Mammary epithelial cell (primary cell): ENCODE measurements at regions of chr1 and their contacts with region 1.

Region 1: DNA sequence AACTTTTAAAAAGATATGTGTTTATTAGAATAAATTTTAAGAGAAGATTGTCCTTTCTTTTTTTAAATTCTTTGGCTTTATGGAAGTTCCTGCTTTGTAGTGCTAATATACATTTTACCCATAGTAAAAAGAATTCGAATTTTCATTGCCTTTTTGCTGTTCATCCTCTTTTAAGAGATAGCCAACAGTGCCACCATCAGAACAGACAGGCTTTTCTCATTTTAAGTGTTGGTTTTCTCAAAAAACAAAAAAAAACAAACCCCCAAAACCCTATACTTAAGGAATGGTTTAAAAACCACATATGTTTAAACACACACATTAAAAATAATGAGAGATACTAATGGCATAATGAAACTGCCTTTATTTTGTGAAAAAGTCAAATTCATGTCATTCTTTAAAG is 118.8 kb downstream of the NEK7 start:
- DNase-seq: no peak
- H3K4me3 ChIP-seq: no peak overlapping the region
- H3K27ac ChIP-seq: no peak overlapping the region
- H3K4me1 ChIP-seq: no peaks in the 10 kb centered on the region
- H3K27me3 ChIP-seq: no peaks in the 10 kb centered on the region
- CTCF ChIP-seq: no peak

Region 2: GRCh38 chr1:198088360-198089071 is 187.1 kb before region 1 on chr1:
- CTCF ChIA-PET with region 1: interaction called, 3 read pairs
- dilution Hi-C with region 1: no loop called
- in situ Hi-C with region 1: no loop called
- intact Hi-C with region 1: loop called (anchors 5 kb)
- DNase-seq: peak; percentile 45
- H3K4me3 ChIP-seq: no peak overlapping the region
- H3K27ac ChIP-seq: no peak overlapping the region
- H3K4me1 ChIP-seq: no peaks in the 10 kb centered on the region
- H3K27me3 ChIP-seq: no peaks in the 10 kb centered on the region
- CTCF ChIP-seq: peak; percentile 56 to 66

Region 3: GRCh38 chr1:198201956-198202784 is 73.4 kb before region 1 on chr1:
- CTCF ChIA-PET with region 1: no interaction called
- dilution Hi-C with region 1: no loop called
- in situ Hi-C with region 1: no loop called
- intact Hi-C with region 1: loop called (anchors 5 kb)
- DNase-seq: no peak
- H3K4me3 ChIP-seq: no peak overlapping the region
- H3K27ac ChIP-seq: no peak overlapping the region
- H3K4me1 ChIP-seq: peaks cover 4% of the 10 kb centered on the region
- H3K27me3 ChIP-seq: no peaks in the 10 kb centered on the region
- CTCF ChIP-seq: no peak

Region 4: DNA sequence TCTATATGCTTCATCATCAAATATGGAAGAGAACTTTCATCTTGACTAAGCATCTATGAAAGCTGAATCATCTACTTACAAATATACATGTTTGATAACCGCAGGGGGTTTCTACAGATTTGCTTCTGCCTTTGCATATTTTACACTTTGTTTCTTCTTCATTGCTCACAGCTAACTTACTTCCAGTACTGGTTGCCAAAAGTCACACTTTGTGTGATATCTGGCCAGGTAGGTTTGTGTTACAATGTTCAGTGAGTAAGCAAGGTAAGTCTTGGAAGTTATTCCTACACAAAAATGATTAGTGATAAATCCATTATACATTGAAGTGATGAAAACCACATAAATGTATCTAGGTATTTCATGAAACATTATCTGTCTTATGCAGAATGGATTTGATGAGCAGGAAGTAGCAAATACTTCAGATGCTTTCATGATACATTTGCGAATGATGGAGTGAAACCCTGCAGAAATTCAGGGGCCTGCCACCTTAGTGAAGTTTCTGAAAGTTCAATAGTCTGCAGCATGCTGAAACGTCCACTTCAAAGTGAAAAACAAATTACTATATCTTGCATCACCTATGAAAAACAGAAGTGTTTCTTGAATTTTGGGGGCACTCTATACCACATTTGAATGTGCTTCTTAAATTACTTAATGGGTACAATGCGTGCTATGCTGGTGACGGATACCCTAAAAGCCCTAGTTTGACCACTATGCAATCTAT is 77.5 kb after region 1 on chr1:
- CTCF ChIA-PET with region 1: no interaction called
- dilution Hi-C with region 1: no loop called
- in situ Hi-C with region 1: no loop called
- intact Hi-C with region 1: loop called (anchors 2 kb)
- DNase-seq: peak; percentile 54
- H3K4me3 ChIP-seq: no peak overlapping the region
- H3K27ac ChIP-seq: no peak overlapping the region
- H3K4me1 ChIP-seq: no peaks in the 10 kb centered on the region
- H3K27me3 ChIP-seq: no peaks in the 10 kb centered on the region
- CTCF ChIP-seq: no peak